Activated CD4-positive, alpha-beta T cell treated with anti-CD3 and anti-CD28 coated beads, Interleukin-2, amount 10 ng/mL, durations not matched to agents 24 days and 14 days (primary cell): ENCODE measurements at regions of chr9 and their contacts with region 1.

Region 1: DNA sequence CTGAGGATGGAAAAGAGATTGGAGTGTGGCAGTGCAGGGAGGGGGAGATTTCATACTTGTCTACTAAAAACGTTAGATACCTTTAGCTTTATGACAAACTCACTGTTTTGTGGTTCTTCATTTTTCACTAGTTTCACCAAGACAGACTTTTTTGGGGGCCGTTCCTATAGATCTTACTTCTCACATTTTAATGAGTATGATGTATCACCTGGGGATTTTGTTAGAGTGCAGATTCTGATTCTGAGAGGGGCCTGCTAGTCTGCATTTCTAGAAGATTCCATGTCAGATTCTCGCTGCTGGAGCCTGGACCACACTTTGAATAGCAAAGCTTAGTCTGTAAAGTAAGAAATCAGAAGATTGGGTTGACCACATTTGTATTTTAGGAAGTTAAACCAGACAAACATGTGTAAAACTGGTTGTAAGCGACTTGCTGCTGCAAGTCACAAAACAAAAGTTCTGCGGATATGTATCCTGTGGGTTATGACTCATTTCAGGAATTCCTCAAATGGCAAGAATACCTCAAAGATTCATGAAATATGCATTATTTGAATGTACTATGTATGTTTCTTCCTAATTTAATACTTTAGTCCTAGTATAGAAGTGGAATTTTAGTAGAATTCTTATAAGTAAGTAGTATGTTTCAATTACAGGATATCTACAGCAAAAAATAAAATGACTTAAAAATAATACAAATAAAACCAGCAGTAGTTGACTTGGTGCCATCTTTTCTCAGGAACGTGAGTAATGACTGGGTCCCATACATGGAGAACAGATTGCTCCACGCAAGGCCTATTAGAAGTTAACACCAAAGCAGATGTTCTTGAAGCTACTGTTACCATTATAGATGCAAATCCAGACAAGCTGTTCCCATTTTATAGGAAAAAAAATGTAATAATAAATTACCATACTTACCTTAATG is 27.8 kb downstream of the NFIL3 start:
- DNase-seq: peak; percentile 80
- H3K4me3 Mint-ChIP-seq: peak overlapping the region; percentile 57
- H3K27ac Mint-ChIP-seq: peak overlapping the region; percentile 86
- H3K4me1 Mint-ChIP-seq: peaks cover 12% of the 10 kb centered on the region
- H3K27me3 Mint-ChIP-seq: peaks cover 2% of the 10 kb centered on the region

Region 2: DNA sequence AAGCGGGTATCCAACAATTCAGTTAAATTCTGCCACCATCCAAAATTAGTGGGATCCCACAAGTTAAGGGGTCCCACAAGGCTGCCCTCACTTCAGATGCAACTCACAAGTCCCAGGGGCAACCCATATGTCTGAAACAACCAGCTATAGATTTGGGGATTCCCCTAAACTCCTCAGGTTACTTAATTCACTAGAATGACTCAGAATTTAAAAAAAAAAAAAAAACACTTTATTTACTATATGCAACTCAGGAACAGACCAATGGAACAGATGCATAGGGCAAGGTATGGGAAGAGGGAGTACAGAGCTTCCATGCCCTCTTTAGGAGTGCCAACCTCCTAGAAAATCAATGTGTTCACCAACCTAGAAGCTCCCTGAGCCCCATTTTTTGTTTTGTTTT is 49.2 kb before region 1 on chr9:
- intact Hi-C with region 1: loop called (anchors 1 kb)
- DNase-seq: peak; percentile 69
- H3K4me3 Mint-ChIP-seq: no peak overlapping the region
- H3K27ac Mint-ChIP-seq: peak overlapping the region; percentile 49
- H3K4me1 Mint-ChIP-seq: peaks cover 40% of the 10 kb centered on the region
- H3K27me3 Mint-ChIP-seq: no peaks in the 10 kb centered on the region

Region 3: DNA sequence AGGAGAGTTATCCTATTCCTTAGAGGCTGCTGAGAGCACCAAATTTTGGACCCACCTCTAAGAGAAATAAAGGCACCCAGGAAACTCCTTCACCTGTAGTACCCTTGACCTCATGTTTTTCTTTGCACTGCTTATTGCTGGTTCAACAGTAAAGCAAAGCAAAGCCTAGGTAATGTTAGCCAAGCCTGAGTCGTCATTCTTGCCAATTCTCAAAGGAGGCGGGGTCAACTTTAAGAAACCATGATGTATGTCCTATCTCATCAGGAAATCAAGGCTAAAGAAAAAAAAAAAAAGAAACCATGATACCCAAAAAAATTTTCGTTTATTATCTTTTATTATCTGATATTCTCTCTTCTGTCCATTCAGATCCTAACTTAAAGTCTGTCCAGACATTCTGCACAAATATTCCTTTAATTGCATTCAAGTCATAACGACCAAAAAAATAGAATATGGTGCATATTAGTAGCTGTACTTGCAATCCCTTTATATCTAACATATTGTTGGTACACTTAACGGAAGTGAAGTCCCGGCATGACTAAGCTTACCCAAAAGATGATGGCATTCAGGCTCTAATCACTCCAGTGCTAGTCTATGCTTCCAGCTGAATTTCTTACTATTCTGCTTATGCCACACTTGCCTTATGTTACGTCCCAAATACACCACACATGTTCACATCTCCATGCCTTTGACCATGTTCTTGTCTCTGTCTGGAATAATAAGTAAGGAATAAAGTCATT is 35.9 kb before region 1 on chr9:
- intact Hi-C with region 1: loop called (anchors 1 kb)
- DNase-seq: peak; percentile 74
- H3K4me3 Mint-ChIP-seq: peak overlapping the region; percentile 93
- H3K27ac Mint-ChIP-seq: peak overlapping the region; percentile 99
- H3K4me1 Mint-ChIP-seq: peaks cover 58% of the 10 kb centered on the region
- H3K27me3 Mint-ChIP-seq: no peaks in the 10 kb centered on the region

Region 4: DNA sequence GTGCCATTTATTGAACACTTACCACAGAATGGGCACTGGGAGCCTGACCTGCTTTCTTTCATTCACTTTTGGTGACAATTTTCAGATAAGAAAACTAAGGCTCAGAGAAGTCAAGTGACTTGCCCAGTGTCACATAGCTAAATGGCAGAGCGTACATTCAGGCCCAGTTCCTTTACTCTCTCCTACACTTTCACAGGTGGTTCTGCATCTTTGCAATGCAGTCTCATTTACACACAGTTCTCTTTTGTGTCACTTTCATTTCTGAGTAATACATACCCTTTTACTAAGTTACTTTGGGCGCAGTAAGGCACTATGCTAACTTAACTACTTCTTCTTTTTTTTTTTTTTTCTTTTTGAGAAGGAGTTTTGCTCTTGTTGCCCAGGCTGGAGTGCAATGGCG is 19.5 kb after region 1 on chr9:
- intact Hi-C with region 1: loop called (anchors 1 kb)
- DNase-seq: peak; percentile 69
- H3K4me3 Mint-ChIP-seq: peak overlapping the region; percentile 63
- H3K27ac Mint-ChIP-seq: peak overlapping the region; percentile 86
- H3K4me1 Mint-ChIP-seq: peaks cover 79% of the 10 kb centered on the region
- H3K27me3 Mint-ChIP-seq: no peaks in the 10 kb centered on the region

Region 5: DNA sequence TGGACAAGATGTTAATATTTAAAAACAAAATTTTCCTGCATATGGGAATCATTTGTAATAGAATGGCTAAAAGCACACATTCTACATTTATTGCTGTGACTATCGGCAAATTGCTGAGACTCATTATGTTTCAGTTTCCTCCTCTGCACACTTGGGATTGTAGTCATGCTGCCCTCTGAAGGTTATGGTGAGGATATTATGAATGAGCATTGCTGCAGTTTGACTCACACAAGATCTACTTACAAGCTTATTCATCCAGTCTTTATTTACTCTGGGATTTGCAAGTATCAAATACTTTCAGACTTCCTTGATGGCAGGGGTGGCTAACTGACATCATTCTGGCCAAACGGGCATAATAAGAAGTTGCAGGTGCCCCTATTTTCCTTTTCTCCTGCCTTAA is 37.4 kb after region 1 on chr9:
- intact Hi-C with region 1: no loop called
- DNase-seq: peak; percentile 75
- H3K4me3 Mint-ChIP-seq: no peak overlapping the region
- H3K27ac Mint-ChIP-seq: no peak overlapping the region
- H3K4me1 Mint-ChIP-seq: peaks cover 20% of the 10 kb centered on the region
- H3K27me3 Mint-ChIP-seq: peaks cover 18% of the 10 kb centered on the region